CD4-positive, alpha-beta T cell (primary cell): ENCODE measurements at regions of chr11 and their contacts with region 1.

Region 1: DNA sequence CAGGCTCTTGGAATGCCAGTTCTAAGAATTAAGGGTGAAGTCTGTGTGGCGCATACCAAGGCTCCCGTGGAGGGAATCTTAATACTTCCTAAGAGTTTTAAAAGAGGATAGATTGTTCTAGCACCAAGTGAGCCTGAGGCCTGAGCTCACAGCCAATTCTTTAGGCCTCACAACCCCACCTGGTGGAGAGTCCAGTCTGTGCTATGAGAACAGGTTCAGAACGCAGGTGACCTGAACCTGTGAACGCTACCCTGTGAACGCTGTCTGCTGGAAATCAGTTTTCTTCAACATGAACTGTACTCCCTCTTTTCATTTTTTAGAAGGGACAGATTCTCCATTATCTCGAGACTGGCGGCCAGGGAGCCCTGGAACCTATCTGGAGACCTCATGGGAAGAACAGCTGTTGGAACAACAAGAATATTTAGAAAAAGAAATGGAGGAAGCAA is 43.2 kb upstream of the DLAT start:
- DNase-seq: peak; percentile 32 to 74 (median 50)
- ATAC-seq: peak; percentile 86
- H3K4me3 ChIP-seq: no peak overlapping the region
- H3K4me3 Mint-ChIP-seq: no peak overlapping the region
- H3K27ac ChIP-seq: no peak overlapping the region
- H3K27ac Mint-ChIP-seq: no peak overlapping the region
- H3K4me1 ChIP-seq: peaks cover 9% of the 10 kb centered on the region
- H3K4me1 Mint-ChIP-seq: peaks cover 10% of the 10 kb centered on the region
- H3K27me3 ChIP-seq: peaks cover 8 to 16% of the 10 kb centered on the region in 2 experiments
- H3K27me3 Mint-ChIP-seq: peaks cover 30% of the 10 kb centered on the region
- CTCF ChIP-seq: peak; percentile 56

Region 2: DNA sequence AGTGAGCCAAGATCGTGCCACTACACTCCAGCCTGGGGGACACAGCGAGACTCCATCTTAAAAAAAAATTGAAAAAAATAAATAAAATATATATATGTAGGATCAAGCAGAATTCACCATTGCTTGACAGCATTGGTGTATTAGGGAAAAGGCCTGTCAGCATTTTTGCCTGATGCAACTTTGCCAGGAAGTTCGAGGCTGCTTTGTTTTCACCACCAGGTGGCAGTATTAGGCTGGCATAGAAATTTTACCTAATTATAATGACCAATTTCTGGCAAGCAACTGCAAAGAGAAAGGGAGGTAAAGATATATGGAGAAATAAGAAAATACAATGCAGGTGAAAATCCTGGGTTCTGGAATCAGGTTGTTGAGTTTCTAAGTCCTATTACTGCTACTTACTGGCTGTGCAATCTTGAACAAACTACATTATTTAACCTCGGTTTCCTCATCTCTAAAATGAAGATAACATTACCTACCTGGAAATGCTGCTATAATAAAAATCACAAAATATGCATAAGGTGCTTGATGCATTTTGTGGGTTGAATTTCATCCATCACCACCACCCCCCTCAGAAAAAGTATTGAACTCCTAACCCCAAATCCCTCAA is 416.8 kb before region 1 on chr11:
- CTCF ChIA-PET with region 1: no interaction called
- POLR2A ChIA-PET with region 1: no interaction called
- intact Hi-C with region 1: loop called in 1 of 2 experiments (anchors 10 kb)
- DNase-seq: peak; percentile 30 to 78 (median 48)
- ATAC-seq: no peak
- H3K4me3 ChIP-seq: no peak overlapping the region
- H3K4me3 Mint-ChIP-seq: no peak overlapping the region
- H3K27ac ChIP-seq: no peak overlapping the region
- H3K27ac Mint-ChIP-seq: no peak overlapping the region
- H3K4me1 ChIP-seq: no peaks in the 10 kb centered on the region
- H3K4me1 Mint-ChIP-seq: no peaks in the 10 kb centered on the region
- H3K27me3 ChIP-seq: peaks cover 0 to 2% of the 10 kb centered on the region in 2 experiments
- H3K27me3 Mint-ChIP-seq: no peaks in the 10 kb centered on the region
- CTCF ChIP-seq: peak; percentile 96

Region 3: GRCh38 chr11:111878849-111879636 is 103.0 kb before region 1 on chr11 and contains the starts of genes CFAP68 and FDXACB1:
- CTCF ChIA-PET with region 1: no interaction called
- POLR2A ChIA-PET with region 1: interaction called, 3 read pairs
- intact Hi-C with region 1: loop called (anchors 2 to 5 kb)
- DNase-seq: peak; percentile 89 to 99 (median 93)
- ATAC-seq: peak; percentile 88
- H3K4me3 ChIP-seq: peak within 1 kb of the TSS; percentile 76
- H3K4me3 Mint-ChIP-seq: peak within 1 kb of the TSS; percentile 92
- H3K27ac ChIP-seq: peak within 1 kb of the TSS; percentile 97 to 99
- H3K27ac Mint-ChIP-seq: peak within 1 kb of the TSS; percentile 94
- H3K4me1 ChIP-seq: peaks cover 14% of the 10 kb centered on the region
- H3K4me1 Mint-ChIP-seq: peaks cover 18% of the 10 kb centered on the region
- H3K27me3 ChIP-seq: no peaks in the 10 kb centered on the region
- H3K27me3 Mint-ChIP-seq: no peaks in the 10 kb centered on the region
- CTCF ChIP-seq: peak; percentile 98
- total RNA-seq, gene CFAP68: 18.7 to 21.0 TPM
- total RNA-seq, gene FDXACB1: 3.4 to 3.9 TPM

Region 4: DNA sequence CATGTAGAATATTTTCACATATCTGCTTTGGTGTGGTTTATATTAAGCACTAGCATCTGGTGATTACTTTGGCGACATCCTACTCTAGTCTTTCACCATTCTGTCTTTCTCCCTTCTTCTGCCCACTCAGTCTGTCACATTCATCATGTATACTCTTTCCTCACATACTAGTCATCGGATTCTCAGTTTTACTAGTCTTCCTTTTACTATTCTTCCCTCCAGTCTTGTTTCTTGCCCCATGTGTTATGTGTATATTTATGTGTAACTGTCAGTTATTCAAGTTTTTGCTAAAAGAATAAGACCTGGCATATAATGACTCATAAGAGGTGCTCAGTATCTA is 49.5 kb before region 1 on chr11:
- CTCF ChIA-PET with region 1: interaction called, 12 read pairs
- POLR2A ChIA-PET with region 1: interaction called, 5 read pairs
- intact Hi-C with region 1: loop called (anchors 1 kb)
- DNase-seq: no peak
- ATAC-seq: no peak
- H3K4me3 ChIP-seq: no peak overlapping the region
- H3K4me3 Mint-ChIP-seq: no peak overlapping the region
- H3K27ac ChIP-seq: no peak overlapping the region
- H3K27ac Mint-ChIP-seq: no peak overlapping the region
- H3K4me1 ChIP-seq: peaks cover 22% of the 10 kb centered on the region
- H3K4me1 Mint-ChIP-seq: peaks cover 24% of the 10 kb centered on the region
- H3K27me3 ChIP-seq: no peaks in the 10 kb centered on the region
- H3K27me3 Mint-ChIP-seq: no peaks in the 10 kb centered on the region
- CTCF ChIP-seq: no peak

Region 5: DNA sequence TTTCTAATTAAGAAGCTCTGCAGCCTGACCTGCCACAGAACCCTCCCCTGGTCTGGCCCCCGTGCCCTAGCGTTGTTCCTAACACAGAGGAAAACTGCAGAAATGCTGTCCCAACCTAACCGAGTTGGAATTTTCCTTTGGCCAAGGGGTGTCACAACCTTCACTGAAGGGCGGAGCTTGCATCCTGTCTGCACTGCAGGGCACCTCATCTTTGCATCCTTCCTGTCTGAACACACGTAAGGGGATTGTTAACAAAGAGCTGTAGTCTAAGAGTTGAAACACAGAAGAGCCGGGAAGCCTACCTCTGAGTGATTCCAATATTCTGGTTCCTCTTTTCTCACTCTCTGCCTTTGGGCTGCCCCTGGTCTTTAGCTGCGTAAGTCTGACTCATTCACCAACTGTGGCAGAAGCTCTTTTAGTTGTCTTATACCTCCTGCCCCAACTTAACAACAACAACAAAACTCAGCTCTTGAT is 43.3 kb before region 1 on chr11:
- CTCF ChIA-PET with region 1: interaction called, 3 read pairs
- POLR2A ChIA-PET with region 1: no interaction called
- intact Hi-C with region 1: loop called in 1 of 2 experiments (anchors 2 kb)
- DNase-seq: peak in 5 of 14 experiments; percentile 11 to 62 (median 51)
- ATAC-seq: peak; percentile 72
- H3K4me3 ChIP-seq: no peak overlapping the region
- H3K4me3 Mint-ChIP-seq: peak overlapping the region; percentile 70
- H3K27ac ChIP-seq: peak overlapping the region in 1 of 2 donors; percentile 25
- H3K27ac Mint-ChIP-seq: peak overlapping the region; percentile 84
- H3K4me1 ChIP-seq: peaks cover 26% of the 10 kb centered on the region
- H3K4me1 Mint-ChIP-seq: peaks cover 39% of the 10 kb centered on the region
- H3K27me3 ChIP-seq: no peaks in the 10 kb centered on the region
- H3K27me3 Mint-ChIP-seq: no peaks in the 10 kb centered on the region
- CTCF ChIP-seq: no peak

Region 6: GRCh38 chr11:112525270-112525669 is 543.2 kb after region 1 on chr11:
- CTCF ChIA-PET with region 1: no interaction called
- POLR2A ChIA-PET with region 1: no interaction called
- intact Hi-C with region 1: no loop called
- DNase-seq: peak in 3 of 14 experiments; percentile 8 to 30 (median 12)
- ATAC-seq: no peak
- H3K4me3 ChIP-seq: no peak overlapping the region
- H3K4me3 Mint-ChIP-seq: no peak overlapping the region
- H3K27ac ChIP-seq: no peak overlapping the region
- H3K27ac Mint-ChIP-seq: no peak overlapping the region
- H3K4me1 ChIP-seq: peaks cover 3% of the 10 kb centered on the region
- H3K4me1 Mint-ChIP-seq: no peaks in the 10 kb centered on the region
- H3K27me3 ChIP-seq: peaks cover 0 to 2% of the 10 kb centered on the region in 2 experiments
- H3K27me3 Mint-ChIP-seq: no peaks in the 10 kb centered on the region
- CTCF ChIP-seq: no peak